ENCODE measurements at regions of chr3 and their contacts with region 1.

Region 1: GRCh38 chr3:101163554-101163953 is 156.8 kb downstream of the IMPG2 start:
- DNase-seq: no peak
- ATAC-seq: peak; percentile 40; the same call in 1 of the 2 replicates
- H3K4me3 ChIP-seq: no peak overlapping the region
- H3K27ac ChIP-seq: no peak overlapping the region
- H3K4me1 ChIP-seq: no peaks in the 10 kb centered on the region
- H3K27me3 ChIP-seq: no peaks in the 10 kb centered on the region; the same call in 1 of the 2 replicates
- CTCF ChIP-seq: no peak
- POLR2A ChIP-seq: no peak
- RAD21 ChIP-seq: no peak

Region 2: DNA sequence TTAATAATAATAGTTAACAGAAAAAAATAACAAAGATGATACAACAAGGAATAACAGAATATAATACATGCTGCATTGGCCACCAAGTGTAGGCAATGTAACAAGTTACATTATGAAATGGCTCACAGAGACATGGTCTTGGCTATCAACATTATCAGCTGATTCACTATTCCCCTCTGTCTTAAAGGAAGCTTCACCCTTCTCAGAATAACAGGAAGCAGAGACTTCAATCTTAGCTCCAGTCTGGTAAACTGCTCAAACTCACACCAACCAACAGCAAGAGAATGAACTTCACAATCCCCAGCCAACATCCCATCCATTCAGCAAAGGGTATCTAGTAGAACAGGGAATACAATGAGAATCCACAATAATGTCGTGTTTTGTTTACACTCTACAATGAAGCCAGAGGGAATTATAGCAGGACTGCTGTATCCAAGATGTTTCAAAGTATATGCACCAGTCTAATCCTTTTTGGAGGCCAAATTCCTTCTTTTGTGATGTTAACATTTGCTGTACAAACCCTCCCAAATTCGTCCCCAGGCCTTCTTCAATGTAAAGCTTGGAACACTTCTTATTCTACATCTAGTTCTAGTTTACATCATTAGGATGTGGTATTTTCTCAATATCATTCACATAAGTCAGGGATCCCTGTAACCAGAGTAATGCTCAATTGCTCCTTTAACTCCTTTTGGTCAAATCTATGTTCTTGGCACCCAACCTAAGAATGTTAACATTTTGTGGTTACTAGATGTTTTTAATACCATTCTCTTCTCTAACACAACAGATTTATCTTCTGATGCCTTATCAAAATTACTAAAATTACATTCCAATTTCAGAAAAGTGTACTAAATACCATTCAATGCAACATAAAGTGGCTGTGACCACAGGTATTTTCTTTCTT is 1398.3 kb before region 1 on chr3:
- CTCF ChIA-PET with region 1: no interaction called
- POLR2A ChIA-PET with region 1: interaction called, 21 read pairs
- dilution Hi-C with region 1: no loop called
- in situ Hi-C with region 1: no loop called
- intact Hi-C with region 1: no loop called
- DNase-seq: peak; percentile 73
- ATAC-seq: peak; percentile 72
- H3K4me3 ChIP-seq: no peak overlapping the region
- H3K27ac ChIP-seq: no peak overlapping the region; the same call in 1 of the 2 replicates
- H3K4me1 ChIP-seq: peaks cover 9% of the 10 kb centered on the region; the same call in 1 of the 2 replicates
- H3K27me3 ChIP-seq: no peaks in the 10 kb centered on the region
- CTCF ChIP-seq: no peak
- POLR2A ChIP-seq: no peak
- RAD21 ChIP-seq: no peak